Caco-2 (cell line): ENCODE measurements at regions of chr2 and their contacts with region 1.

Region 1: GRCh38 chr2:8574144-8575037 is 107.5 kb upstream of the ID2 start:
- DNase-seq: peak in 1 of 2 experiments; percentile 65
- H3K4me3 ChIP-seq: no peak overlapping the region
- H3K4me3 Mint-ChIP-seq: peak overlapping the region; percentile 49
- H3K27ac Mint-ChIP-seq: peak overlapping the region; percentile 96
- H3K4me1 ChIP-seq: peaks cover 40% of the 10 kb centered on the region
- H3K4me1 Mint-ChIP-seq: peaks cover 45% of the 10 kb centered on the region
- H3K27me3 ChIP-seq: no peaks in the 10 kb centered on the region
- H3K27me3 Mint-ChIP-seq: no peaks in the 10 kb centered on the region
- CTCF ChIP-seq: no peak

Region 2: GRCh38 chr2:7392076-7392787 is 1182.2 kb before region 1 on chr2:
- CTCF ChIA-PET with region 1: no interaction called
- POLR2A ChIA-PET with region 1: no interaction called
- intact Hi-C with region 1: no loop called
- DNase-seq: no peak
- H3K4me3 ChIP-seq: no peak overlapping the region
- H3K4me3 Mint-ChIP-seq: no peak overlapping the region
- H3K27ac Mint-ChIP-seq: no peak overlapping the region
- H3K4me1 ChIP-seq: no peaks in the 10 kb centered on the region
- H3K4me1 Mint-ChIP-seq: no peaks in the 10 kb centered on the region
- H3K27me3 ChIP-seq: no peaks in the 10 kb centered on the region
- H3K27me3 Mint-ChIP-seq: peaks cover 15% of the 10 kb centered on the region
- CTCF ChIP-seq: no peak

Region 3: DNA sequence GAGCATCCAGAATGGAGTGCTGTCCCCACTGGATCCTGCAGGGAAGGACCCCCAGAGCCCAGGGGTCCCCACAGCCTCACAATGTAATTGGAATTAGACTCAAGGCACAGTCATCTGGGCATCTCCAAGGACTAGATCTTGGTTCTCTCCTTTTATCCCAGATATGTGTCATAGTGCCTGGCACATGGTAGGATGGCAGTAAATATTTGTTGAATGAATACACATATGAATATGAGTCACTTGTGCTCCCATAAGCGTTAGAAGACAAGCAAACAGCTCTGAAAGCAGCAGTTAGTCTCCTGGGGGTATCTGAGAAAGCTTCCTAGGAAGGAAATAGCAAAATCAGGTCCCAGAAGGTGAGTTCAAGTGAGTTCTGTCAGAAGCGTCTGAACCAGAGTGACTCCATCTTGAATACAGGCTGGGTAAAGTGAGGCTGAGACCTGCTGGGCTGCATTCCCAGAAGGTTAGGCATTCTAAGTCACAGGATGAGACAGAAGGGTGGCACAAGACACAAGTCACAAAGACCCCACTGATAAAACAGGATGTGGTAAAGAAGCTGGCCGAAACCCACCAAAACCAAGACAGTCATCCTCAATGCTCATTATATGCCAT is 126.7 kb before region 1 on chr2:
- CTCF ChIA-PET with region 1: no interaction called
- POLR2A ChIA-PET with region 1: no interaction called
- intact Hi-C with region 1: no loop called
- DNase-seq: peak in 1 of 2 experiments; percentile 3
- H3K4me3 ChIP-seq: no peak overlapping the region
- H3K4me3 Mint-ChIP-seq: no peak overlapping the region
- H3K27ac Mint-ChIP-seq: no peak overlapping the region
- H3K4me1 ChIP-seq: no peaks in the 10 kb centered on the region
- H3K4me1 Mint-ChIP-seq: peaks cover 2% of the 10 kb centered on the region
- H3K27me3 ChIP-seq: no peaks in the 10 kb centered on the region
- H3K27me3 Mint-ChIP-seq: no peaks in the 10 kb centered on the region
- CTCF ChIP-seq: no peak

Region 4: GRCh38 chr2:8539743-8540551 is 34.4 kb before region 1 on chr2:
- CTCF ChIA-PET with region 1: interaction called, 5 read pairs
- POLR2A ChIA-PET with region 1: no interaction called
- intact Hi-C with region 1: loop called (anchors 1 kb)
- DNase-seq: peak; percentile 78 to 82
- H3K4me3 ChIP-seq: no peak overlapping the region
- H3K4me3 Mint-ChIP-seq: peak overlapping the region; percentile 51
- H3K27ac Mint-ChIP-seq: peak overlapping the region; percentile 82
- H3K4me1 ChIP-seq: peaks cover 53% of the 10 kb centered on the region
- H3K4me1 Mint-ChIP-seq: peaks cover 37% of the 10 kb centered on the region
- H3K27me3 ChIP-seq: no peaks in the 10 kb centered on the region
- H3K27me3 Mint-ChIP-seq: no peaks in the 10 kb centered on the region
- CTCF ChIP-seq: peak in 1 of 2 experiments; percentile 25

Region 5: GRCh38 chr2:8606226-8606625 is 31.8 kb after region 1 on chr2:
- CTCF ChIA-PET with region 1: no interaction called
- POLR2A ChIA-PET with region 1: interaction called, 3 read pairs
- intact Hi-C with region 1: loop called (anchors 1 kb)
- DNase-seq: peak in 1 of 2 experiments; percentile 8
- H3K4me3 ChIP-seq: no peak overlapping the region
- H3K4me3 Mint-ChIP-seq: no peak overlapping the region
- H3K27ac Mint-ChIP-seq: peak overlapping the region; percentile 69
- H3K4me1 ChIP-seq: peaks cover 86% of the 10 kb centered on the region
- H3K4me1 Mint-ChIP-seq: peaks cover 69% of the 10 kb centered on the region
- H3K27me3 ChIP-seq: no peaks in the 10 kb centered on the region
- H3K27me3 Mint-ChIP-seq: no peaks in the 10 kb centered on the region
- CTCF ChIP-seq: no peak

Region 6: GRCh38 chr2:8719528-8719927 is 145.1 kb after region 1 on chr2:
- CTCF ChIA-PET with region 1: no interaction called
- POLR2A ChIA-PET with region 1: no interaction called
- intact Hi-C with region 1: no loop called
- DNase-seq: no peak
- H3K4me3 ChIP-seq: no peak overlapping the region
- H3K4me3 Mint-ChIP-seq: no peak overlapping the region
- H3K27ac Mint-ChIP-seq: no peak overlapping the region
- H3K4me1 ChIP-seq: no peaks in the 10 kb centered on the region
- H3K4me1 Mint-ChIP-seq: no peaks in the 10 kb centered on the region
- H3K27me3 ChIP-seq: no peaks in the 10 kb centered on the region
- H3K27me3 Mint-ChIP-seq: no peaks in the 10 kb centered on the region
- CTCF ChIP-seq: no peak